Activated T-helper 1 cell treated with anti-CD3 and anti-CD28 coated beads, Interleukin-12 subunit alpha, Interleukin-12 subunit beta, Interleukin-2, Interleukin-4 antibody, amounts not matched to agents 30 ng/mL and 10 ng/mL and 1 ng/mL, durations not matched to agents 14 hours and 24 hours and 36 hours (primary cell): ENCODE measurements at regions of chr5 and their contacts with region 1.

Region 1: GRCh38 chr5:59039296-59040023 is 456.6 kb downstream of the RAB3C start:
- DNase-seq: peak; percentile 88
- H3K4me3 Mint-ChIP-seq: peak overlapping the region; percentile 89
- H3K27ac Mint-ChIP-seq: peak overlapping the region; percentile 99
- H3K4me1 Mint-ChIP-seq: peaks cover 56% of the 10 kb centered on the region
- H3K27me3 Mint-ChIP-seq: no peaks in the 10 kb centered on the region

Region 2: DNA sequence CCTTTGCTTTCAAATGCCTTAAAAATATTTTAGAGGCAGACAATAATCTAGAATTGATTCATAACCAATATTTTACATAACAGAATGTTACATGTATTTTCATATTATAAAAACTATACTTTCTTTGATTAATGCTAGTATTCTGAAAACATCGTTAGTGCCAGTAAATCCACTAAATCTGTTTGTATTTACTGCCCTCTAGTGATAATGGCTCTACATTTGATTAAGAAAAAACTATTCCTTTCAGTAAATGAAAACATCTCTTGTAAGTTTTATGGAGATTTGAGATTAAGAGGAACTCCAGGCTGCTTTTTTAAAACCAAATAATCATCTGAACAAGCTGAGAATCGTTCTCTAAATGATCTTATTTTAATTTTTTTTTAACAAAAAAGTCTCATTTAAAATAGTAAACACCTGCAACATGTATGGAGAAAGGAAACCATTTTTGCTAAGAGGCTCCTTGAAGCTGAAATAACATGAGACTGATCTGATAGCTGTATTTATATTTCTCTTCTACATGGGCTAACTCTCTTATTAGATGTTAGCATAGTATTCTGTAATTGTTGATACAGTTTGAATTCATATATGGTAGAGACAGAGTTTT is 31.9 kb before region 1 on chr5:
- intact Hi-C with region 1: loop called (anchors 1 kb)
- DNase-seq: no peak
- H3K4me3 Mint-ChIP-seq: no peak overlapping the region
- H3K27ac Mint-ChIP-seq: no peak overlapping the region
- H3K4me1 Mint-ChIP-seq: peaks cover 90% of the 10 kb centered on the region
- H3K27me3 Mint-ChIP-seq: no peaks in the 10 kb centered on the region

Region 3: GRCh38 chr5:59126708-59127573 is 87.5 kb after region 1 on chr5:
- intact Hi-C with region 1: loop called (anchors 1 kb)
- DNase-seq: no peak
- H3K4me3 Mint-ChIP-seq: no peak overlapping the region
- H3K27ac Mint-ChIP-seq: no peak overlapping the region
- H3K4me1 Mint-ChIP-seq: peaks cover 14% of the 10 kb centered on the region
- H3K27me3 Mint-ChIP-seq: no peaks in the 10 kb centered on the region

Region 4: GRCh38 chr5:59238126-59238902 is 198.9 kb after region 1 on chr5:
- intact Hi-C with region 1: loop called (anchors 5 kb)
- DNase-seq: no peak
- H3K4me3 Mint-ChIP-seq: no peak overlapping the region
- H3K27ac Mint-ChIP-seq: no peak overlapping the region
- H3K4me1 Mint-ChIP-seq: peaks cover 18% of the 10 kb centered on the region
- H3K27me3 Mint-ChIP-seq: peaks cover 61% of the 10 kb centered on the region

Region 5: DNA sequence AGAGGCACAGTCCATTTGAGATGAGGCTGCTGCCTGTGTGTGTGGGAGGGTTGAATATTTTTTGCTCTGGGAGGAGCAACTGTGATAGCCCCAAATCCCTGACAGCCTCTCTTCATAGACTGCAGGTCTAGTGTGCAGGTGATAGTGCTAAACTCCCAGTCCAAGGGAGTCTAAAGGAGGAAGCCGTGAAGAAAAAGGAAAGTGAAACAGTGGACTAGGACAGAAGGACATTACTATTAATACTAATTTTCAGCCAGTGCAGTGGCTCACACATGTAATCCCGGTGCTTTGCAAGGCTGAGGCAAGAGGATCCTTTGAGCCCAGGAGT is 559.1 kb after region 1 on chr5:
- intact Hi-C with region 1: loop called (anchors 10 kb)
- DNase-seq: no peak
- H3K4me3 Mint-ChIP-seq: no peak overlapping the region
- H3K27ac Mint-ChIP-seq: no peak overlapping the region
- H3K4me1 Mint-ChIP-seq: peaks cover 36% of the 10 kb centered on the region
- H3K27me3 Mint-ChIP-seq: peaks cover 3% of the 10 kb centered on the region